BJ (cell line): ENCODE measurements at regions of chr20 and their contacts with region 1.

Region 1: DNA sequence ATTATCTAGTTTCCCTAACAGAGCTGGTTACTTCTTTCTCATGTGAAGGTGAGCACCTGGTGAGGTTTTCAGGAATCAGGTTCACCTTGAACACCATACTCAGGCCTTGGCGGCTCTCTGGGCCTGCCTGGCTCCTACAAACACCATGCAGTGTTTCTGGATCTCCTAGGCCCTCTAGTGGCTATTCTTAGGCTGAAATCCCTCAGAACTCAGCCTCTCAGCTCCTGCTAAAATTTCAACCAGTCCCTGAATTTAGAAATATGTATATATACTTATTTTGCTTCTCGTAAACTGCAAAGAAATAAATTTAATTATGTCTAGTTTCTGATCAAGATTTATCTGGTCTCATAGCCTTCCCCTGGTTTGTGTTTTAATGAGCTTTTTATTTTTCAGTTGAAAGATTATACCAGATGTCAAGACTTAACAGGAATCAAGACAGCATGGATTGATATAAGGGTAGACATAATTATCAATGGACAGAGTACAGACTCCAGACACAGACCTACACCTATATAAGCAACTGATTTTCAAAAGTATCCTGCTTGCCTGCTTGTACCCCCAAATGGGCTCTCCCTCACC is 55.9 kb downstream of the ANKEF1 start:
- DNase-seq: no peak
- H3K4me3 ChIP-seq: no peak overlapping the region
- H3K27me3 ChIP-seq: no peaks in the 10 kb centered on the region
- CTCF ChIP-seq: peak; percentile 87

Region 2: GRCh38 chr20:9978397-9979004 is 112.2 kb before region 1 on chr20:
- CTCF ChIA-PET with region 1: interaction called, 208 read pairs
- POLR2A ChIA-PET with region 1: interaction called, 4 read pairs
- DNase-seq: peak; percentile 49
- H3K4me3 ChIP-seq: no peak overlapping the region
- H3K27me3 ChIP-seq: no peaks in the 10 kb centered on the region; the same call in none of the 2 replicates
- CTCF ChIP-seq: peak; percentile 71

Region 3: DNA sequence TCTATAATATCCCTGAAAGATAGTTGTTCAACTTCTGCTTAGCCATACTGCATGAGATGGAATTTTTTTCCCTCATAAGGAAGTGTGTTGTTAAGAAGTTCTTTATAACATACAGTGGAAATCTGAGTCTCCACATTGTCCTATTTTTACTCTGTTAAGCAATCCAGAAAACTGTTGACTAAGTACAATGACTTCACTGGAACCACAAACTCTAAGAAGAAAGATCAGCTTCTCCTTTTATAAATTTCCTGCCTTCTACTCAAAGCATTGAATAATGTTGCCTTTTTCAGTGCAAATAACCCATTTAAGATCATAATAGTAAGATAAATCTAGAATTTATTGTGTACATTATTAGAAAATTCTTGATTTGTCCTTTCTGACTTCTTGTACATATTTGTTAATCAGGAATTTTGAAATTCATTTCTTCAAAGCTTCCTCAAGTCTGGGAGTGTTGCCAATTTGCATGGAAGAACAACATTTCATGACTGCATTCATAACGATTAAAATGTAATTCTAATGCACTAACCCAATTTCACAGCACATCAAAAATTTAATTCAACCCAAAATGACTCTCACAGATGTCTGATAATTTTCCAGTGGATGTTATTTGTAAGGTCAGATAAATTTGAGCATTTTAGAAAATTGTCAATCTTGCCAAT is 101.5 kb before region 1 on chr20:
- CTCF ChIA-PET with region 1: interaction called, 23 read pairs
- POLR2A ChIA-PET with region 1: no interaction called
- DNase-seq: peak; percentile 19
- H3K4me3 ChIP-seq: no peak overlapping the region
- H3K27me3 ChIP-seq: no peaks in the 10 kb centered on the region
- CTCF ChIP-seq: no peak

Region 4: GRCh38 chr20:10077081-10077471 is 13.6 kb before region 1 on chr20:
- CTCF ChIA-PET with region 1: interaction called, 39 read pairs
- POLR2A ChIA-PET with region 1: no interaction called
- DNase-seq: no peak
- H3K4me3 ChIP-seq: no peak overlapping the region
- H3K27me3 ChIP-seq: no peaks in the 10 kb centered on the region
- CTCF ChIP-seq: peak; percentile 22; the same call in 1 of the 2 replicates

Region 5: GRCh38 chr20:10105046-10105445 is 14.4 kb after region 1 on chr20:
- CTCF ChIA-PET with region 1: interaction called, 22 read pairs
- POLR2A ChIA-PET with region 1: interaction called, 4 read pairs
- DNase-seq: no peak
- H3K4me3 ChIP-seq: no peak overlapping the region
- H3K27me3 ChIP-seq: no peaks in the 10 kb centered on the region
- CTCF ChIP-seq: no peak

Region 6: GRCh38 chr20:10115021-10115420 is 24.3 kb after region 1 on chr20:
- CTCF ChIA-PET with region 1: interaction called, 15 read pairs
- POLR2A ChIA-PET with region 1: no interaction called
- DNase-seq: peak; percentile 76
- H3K4me3 ChIP-seq: no peak overlapping the region
- H3K27me3 ChIP-seq: no peaks in the 10 kb centered on the region
- CTCF ChIP-seq: no peak

Region 7: DNA sequence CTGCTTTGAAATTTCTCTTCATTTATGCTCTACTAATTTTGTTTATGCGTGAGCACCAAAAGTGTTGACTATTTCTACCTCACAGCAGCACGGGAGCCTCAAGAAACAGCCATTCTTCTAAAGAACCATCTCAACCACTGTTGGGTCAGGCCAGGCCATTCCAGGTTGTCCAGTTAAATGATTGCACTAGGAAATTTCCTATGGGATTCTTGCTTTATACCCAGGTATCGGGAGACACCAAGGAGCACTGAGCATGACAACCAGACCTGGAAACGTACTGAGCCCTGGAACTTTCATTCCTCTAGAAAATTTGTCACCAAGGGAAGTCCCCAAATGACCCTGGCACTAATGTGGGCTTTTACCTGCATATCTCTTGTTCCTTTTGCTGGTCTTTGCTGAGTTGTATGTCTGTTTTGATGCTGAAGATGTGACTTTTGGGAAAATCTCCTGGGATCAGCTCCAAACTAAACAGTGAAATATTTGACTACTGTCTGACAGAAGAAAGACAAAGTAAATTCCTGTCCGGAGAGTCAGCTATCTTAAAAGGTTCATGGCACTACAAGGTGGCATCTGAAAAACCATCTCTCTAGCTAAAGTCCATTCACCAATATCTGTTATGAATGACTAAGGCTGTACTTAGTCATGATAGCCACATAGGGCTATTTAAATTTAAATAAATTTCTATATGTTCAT is 198.4 kb after region 1 on chr20:
- CTCF ChIA-PET with region 1: no interaction called
- POLR2A ChIA-PET with region 1: no interaction called
- DNase-seq: no peak
- H3K4me3 ChIP-seq: no peak overlapping the region
- H3K27me3 ChIP-seq: no peaks in the 10 kb centered on the region
- CTCF ChIP-seq: no peak

Region 8: GRCh38 chr20:10427060-10427692 is 336.5 kb after region 1 on chr20:
- CTCF ChIA-PET with region 1: interaction called, 29 read pairs
- POLR2A ChIA-PET with region 1: no interaction called
- DNase-seq: no peak
- H3K4me3 ChIP-seq: no peak overlapping the region
- H3K27me3 ChIP-seq: no peaks in the 10 kb centered on the region
- CTCF ChIP-seq: peak; percentile 85